Activated CD4-positive, alpha-beta memory T cell treated with anti-CD3 and anti-CD28 coated beads, Interleukin-2, amount 10 ng/mL, durations not matched to agents 7 days and 5 days (primary cell): ENCODE measurements at regions of chr2 and their contacts with region 1.

Region 1: DNA sequence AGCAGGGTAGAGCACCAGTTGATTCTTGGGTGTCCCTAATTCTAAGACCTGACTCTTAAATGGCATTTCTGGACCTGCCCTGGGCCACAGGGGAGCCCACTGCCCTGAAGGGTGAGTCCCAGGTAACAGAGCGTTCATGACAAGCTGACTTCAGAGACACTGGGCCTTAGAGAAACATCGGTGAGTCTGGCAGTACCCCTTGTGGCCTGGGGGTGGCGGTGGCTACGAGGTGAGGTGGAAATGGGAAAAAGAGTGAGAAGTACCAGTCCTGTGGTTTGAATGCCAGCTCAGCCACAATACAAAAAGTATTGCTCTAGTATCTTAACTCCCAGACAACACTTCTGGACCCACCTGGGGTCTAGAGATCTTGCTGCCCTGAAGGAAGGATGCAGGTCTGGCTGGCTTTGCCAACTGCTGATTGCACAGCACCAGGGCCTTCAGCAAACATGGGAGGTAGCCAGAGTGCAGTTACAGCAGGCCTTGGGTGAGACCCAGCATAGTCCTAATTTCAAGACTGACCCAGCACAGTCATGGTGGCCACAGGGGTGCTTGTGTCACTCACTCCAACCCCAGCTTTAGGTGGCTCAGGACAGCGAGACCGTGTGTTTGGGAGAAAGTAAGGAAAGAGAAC is 44.5 kb downstream of the USP34 start:
- DNase-seq: peak; percentile 74
- H3K4me3 Mint-ChIP-seq: no peak overlapping the region
- H3K27ac Mint-ChIP-seq: no peak overlapping the region
- H3K4me1 Mint-ChIP-seq: peaks cover 40% of the 10 kb centered on the region
- H3K27me3 Mint-ChIP-seq: no peaks in the 10 kb centered on the region

Region 2: DNA sequence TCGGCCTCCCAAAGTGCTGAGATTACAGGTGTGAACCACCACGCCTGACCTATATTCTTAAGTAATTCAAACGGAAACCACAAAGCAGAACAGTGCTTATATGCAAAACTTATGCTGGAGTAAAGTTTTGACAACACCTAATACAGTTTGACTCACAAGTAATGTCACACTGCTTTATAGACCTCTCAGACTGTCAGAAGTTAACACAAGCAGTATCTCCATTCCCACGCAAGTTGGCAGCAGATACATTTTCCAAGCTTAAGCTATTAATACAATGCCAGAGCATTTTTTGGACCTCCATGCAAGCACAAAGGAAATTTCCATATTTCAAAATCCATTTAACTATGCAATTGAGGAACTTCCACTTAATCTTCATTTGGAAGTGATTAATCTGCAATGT is 381.7 kb before region 1 on chr2:
- CTCF ChIA-PET with region 1: no interaction called
- POLR2A ChIA-PET with region 1: no interaction called
- DNase-seq: no peak
- H3K4me3 Mint-ChIP-seq: no peak overlapping the region
- H3K27ac Mint-ChIP-seq: no peak overlapping the region
- H3K4me1 Mint-ChIP-seq: peaks cover 25% of the 10 kb centered on the region
- H3K27me3 Mint-ChIP-seq: no peaks in the 10 kb centered on the region

Region 3: GRCh38 chr2:61411109-61411508 is 15.3 kb before region 1 on chr2:
- CTCF ChIA-PET with region 1: interaction called, 22 read pairs
- POLR2A ChIA-PET with region 1: interaction called, 3 read pairs
- DNase-seq: no peak
- H3K4me3 Mint-ChIP-seq: no peak overlapping the region
- H3K27ac Mint-ChIP-seq: no peak overlapping the region
- H3K4me1 Mint-ChIP-seq: peaks cover 22% of the 10 kb centered on the region
- H3K27me3 Mint-ChIP-seq: no peaks in the 10 kb centered on the region

Region 4: GRCh38 chr2:61470965-61471904 is 44.9 kb after region 1 on chr2 and contains the start of gene USP34:
- CTCF ChIA-PET with region 1: interaction called, 17 read pairs
- POLR2A ChIA-PET with region 1: interaction called, 8 read pairs
- DNase-seq: peak; percentile 94
- H3K4me3 Mint-ChIP-seq: peak within 1 kb of the TSS; percentile 91
- H3K27ac Mint-ChIP-seq: peak within 1 kb of the TSS; percentile 95
- H3K4me1 Mint-ChIP-seq: peaks cover 30% of the 10 kb centered on the region
- H3K27me3 Mint-ChIP-seq: no peaks in the 10 kb centered on the region
- total RNA-seq, gene USP34: 77.5 to 79.4 TPM